ENCODE measurements at regions of chr9 and their contacts with region 1.

Region 1: GRCh38 chr9:126781186-126782052 is 23.4 kb upstream of the ZBTB43 start:
- H3K4me3 Mint-ChIP-seq: no peak overlapping the region
- H3K27ac Mint-ChIP-seq: no peak overlapping the region
- H3K4me1 Mint-ChIP-seq: peaks cover 3% of the 10 kb centered on the region
- H3K27me3 Mint-ChIP-seq: peaks cover 52% of the 10 kb centered on the region

Region 2: DNA sequence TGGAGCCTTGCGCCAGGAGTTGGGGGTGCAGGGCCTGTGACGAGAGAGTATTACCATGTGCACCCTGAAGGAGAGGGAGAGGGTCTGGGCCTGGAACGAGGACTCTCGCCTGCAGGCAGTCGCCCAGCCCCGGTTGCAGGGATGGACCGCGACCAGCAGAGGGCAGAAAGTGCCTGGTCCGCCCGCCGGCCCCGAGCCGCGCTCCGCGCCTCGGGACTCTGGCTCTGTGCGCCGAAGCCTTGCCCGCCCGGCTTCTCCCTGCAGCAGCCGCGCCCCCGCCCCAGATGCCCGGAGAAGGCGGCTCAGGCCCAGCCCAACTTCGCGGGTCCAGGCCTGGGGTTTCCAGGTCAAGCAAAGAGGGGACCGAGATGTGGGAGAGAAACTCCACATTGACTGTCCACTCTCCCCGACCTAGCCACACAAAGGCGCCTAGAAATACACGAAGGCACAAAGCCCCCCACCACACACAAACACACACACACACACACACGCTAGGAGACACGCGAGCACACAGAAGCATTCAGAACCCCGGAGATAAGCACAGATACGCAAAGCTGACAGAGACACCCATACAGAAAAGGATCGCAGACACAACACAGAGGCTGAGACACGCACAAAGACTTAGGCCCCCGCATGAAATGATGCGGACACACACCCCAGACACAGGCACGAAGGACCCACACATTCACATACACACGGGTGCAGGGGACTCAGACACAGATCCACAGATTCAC is 169.7 kb before region 1 on chr9:
- intact Hi-C with region 1: loop called (anchors 2 kb)
- H3K4me3 Mint-ChIP-seq: peak overlapping the region; percentile 20
- H3K27ac Mint-ChIP-seq: no peak overlapping the region
- H3K4me1 Mint-ChIP-seq: peaks cover 32% of the 10 kb centered on the region
- H3K27me3 Mint-ChIP-seq: peaks cover 88% of the 10 kb centered on the region

Region 3: GRCh38 chr9:126704873-126705766 is 76.3 kb before region 1 on chr9:
- intact Hi-C with region 1: loop called (anchors 1 kb)
- H3K4me3 Mint-ChIP-seq: peak overlapping the region; percentile 65
- H3K27ac Mint-ChIP-seq: peak overlapping the region; percentile 75
- H3K4me1 Mint-ChIP-seq: peaks cover 39% of the 10 kb centered on the region
- H3K27me3 Mint-ChIP-seq: peaks cover 64% of the 10 kb centered on the region

Region 4: DNA sequence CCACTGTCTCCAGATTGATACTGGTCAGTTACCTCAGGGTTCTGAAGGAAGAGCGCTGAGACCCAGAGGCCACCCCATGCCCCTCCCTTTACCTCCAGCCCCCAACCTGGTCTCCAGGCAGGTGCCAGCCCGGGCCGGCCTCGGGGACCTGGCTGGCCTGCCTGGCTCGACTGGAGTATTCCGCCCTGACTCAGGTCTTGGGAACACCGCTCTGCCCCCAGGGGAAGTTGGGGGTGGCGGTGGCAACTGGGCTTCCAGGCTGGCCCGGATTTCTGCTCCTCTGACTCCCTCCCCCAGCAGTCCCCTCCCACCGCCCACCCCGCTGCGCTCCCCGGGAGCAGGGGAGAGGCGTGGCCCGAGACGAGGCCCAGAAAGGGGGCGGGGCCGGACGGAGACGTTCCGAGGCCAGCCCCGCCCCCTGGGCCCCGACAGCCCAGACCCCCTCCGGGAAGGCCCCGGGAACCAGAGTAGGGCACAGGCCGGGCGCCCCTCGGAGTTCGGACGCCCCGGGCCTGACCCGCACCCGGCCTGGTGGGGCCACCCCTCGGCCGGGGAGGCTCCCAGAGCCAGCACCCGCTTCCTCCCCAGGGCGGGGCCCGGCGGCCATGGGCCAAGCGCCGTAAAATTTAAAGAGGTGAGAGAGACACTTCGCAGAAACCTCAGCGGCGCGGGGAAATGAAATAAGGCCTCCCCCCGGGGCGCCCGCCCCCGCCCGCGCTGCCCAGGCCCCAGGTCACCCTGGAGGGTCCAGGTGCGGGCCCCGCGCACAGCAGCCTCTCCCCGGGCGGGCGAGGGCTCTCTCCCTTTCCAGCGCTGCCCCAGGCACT is 59.0 kb before region 1 on chr9:
- intact Hi-C with region 1: no loop called
- H3K4me3 Mint-ChIP-seq: peak overlapping the region; percentile 84
- H3K27ac Mint-ChIP-seq: peak overlapping the region; percentile 91
- H3K4me1 Mint-ChIP-seq: peaks cover 59% of the 10 kb centered on the region
- H3K27me3 Mint-ChIP-seq: peaks cover 9% of the 10 kb centered on the region

Region 5: DNA sequence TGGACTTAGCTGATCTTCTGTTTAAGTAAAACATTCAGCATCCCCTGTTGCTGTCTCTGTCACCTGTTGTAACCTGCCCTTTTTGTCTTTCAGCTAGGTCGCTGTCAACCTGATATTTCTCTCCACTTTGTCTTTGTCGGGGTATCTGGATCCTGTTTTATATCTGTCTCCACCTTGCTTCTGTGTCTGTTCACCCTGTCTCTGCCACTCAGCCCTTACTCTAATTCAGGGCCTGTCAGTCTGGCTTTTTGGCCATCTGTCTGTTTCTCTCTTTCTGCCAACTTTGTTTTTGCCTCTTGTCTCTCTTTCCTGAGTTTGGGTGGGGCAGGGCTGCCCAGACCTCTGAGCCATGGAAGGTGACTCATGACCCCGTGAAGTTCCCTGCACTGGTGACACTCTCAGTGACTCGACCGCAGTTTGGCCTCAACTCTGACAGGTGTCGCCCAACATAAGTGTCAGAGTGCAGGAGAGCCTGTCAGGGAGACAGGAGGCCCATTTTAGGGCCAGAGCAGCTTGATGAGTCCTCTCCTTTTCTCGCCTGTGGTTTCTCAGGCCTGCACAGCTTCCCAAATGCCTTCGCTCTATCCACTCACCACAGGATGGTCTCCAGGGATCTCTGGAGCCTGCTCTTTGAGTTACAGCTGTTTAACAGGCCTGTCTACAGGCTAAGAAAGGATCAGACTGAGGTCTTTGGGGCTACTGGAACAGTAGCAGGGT is 24.3 kb after region 1 on chr9:
- intact Hi-C with region 1: no loop called
- H3K4me3 Mint-ChIP-seq: peak overlapping the region; percentile 97
- H3K27ac Mint-ChIP-seq: peak overlapping the region; percentile 96
- H3K4me1 Mint-ChIP-seq: peaks cover 32% of the 10 kb centered on the region
- H3K27me3 Mint-ChIP-seq: peaks cover 8% of the 10 kb centered on the region